Calu3 (cell line): ENCODE measurements at regions of chr12 and their contacts with region 1.

Region 1: GRCh38 chr12:118135788-118136558 is at the start of gene PEBP1:
- DNase-seq: peak; percentile 98
- H3K4me3 Mint-ChIP-seq: peak within 1 kb of the TSS; percentile 86
- H3K27ac Mint-ChIP-seq: peak within 1 kb of the TSS; percentile 92
- H3K4me1 Mint-ChIP-seq: peaks cover 29% of the 10 kb centered on the region
- H3K27me3 Mint-ChIP-seq: no peaks in the 10 kb centered on the region
- CTCF ChIP-seq: no peak
- total RNA-seq, gene PEBP1: 99.8 and 109 TPM in 2 replicates

Region 2: DNA sequence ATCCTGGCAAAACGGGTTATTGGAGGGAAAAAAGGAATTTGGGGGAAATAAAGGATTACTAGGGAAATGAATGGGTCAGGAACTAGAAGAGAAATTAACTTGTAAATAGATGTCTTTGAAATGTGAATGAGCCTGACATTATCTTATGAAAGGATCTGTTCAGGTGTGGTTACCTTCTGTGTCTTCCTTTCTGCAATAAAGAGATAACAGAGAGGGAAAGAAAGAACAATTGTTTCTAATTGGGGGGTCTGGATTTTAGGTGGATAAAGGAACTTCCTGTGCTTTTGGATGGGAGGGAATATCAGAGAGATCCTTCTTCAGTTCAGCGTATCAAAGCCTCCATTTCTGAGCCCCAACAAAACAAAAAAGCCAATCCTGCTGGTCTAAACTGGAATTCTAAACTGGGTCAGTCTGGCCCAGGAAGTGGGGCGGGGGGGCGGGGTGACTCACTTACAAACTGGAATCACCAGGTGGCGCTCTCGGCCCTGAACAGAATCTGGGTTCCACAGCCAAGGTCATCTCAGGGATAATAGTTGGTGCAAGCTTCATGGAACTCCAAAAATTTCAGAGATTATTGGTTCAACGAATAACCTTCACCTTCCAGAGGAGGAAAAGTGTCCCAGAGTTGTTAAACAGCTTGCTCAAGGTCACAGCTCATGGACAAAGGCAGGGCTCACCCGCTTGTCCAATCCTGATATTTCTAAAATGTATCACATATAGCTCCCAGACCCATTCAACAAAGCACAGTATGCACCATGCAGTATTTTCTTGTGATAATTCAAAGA is 15.2 kb before region 1 on chr12:
- CTCF ChIA-PET with region 1: interaction called, 11 read pairs
- intact Hi-C with region 1: loop called (anchors 1 kb)
- DNase-seq: peak; percentile 73
- H3K4me3 Mint-ChIP-seq: no peak overlapping the region
- H3K27ac Mint-ChIP-seq: no peak overlapping the region
- H3K4me1 Mint-ChIP-seq: peaks cover 16% of the 10 kb centered on the region
- H3K27me3 Mint-ChIP-seq: no peaks in the 10 kb centered on the region
- CTCF ChIP-seq: peak; percentile 90

Region 3: GRCh38 chr12:118307069-118307954 is 171.3 kb after region 1 on chr12:
- CTCF ChIA-PET with region 1: no interaction called
- intact Hi-C with region 1: no loop called
- DNase-seq: no peak
- H3K4me3 Mint-ChIP-seq: no peak overlapping the region
- H3K27ac Mint-ChIP-seq: no peak overlapping the region
- H3K4me1 Mint-ChIP-seq: peaks cover 28% of the 10 kb centered on the region
- H3K27me3 Mint-ChIP-seq: no peaks in the 10 kb centered on the region
- CTCF ChIP-seq: no peak